ENCODE measurements at regions of chr2 and their contacts with region 1.

Region 1: GRCh38 chr2:50492477-50492851 is 539.5 kb downstream of the NRXN1 start:
- H3K4me3 ChIP-seq: no peak overlapping the region
- H3K27ac ChIP-seq: no peak overlapping the region
- H3K4me1 ChIP-seq: no peaks in the 10 kb centered on the region
- CTCF ChIP-seq: no peak

Region 2: DNA sequence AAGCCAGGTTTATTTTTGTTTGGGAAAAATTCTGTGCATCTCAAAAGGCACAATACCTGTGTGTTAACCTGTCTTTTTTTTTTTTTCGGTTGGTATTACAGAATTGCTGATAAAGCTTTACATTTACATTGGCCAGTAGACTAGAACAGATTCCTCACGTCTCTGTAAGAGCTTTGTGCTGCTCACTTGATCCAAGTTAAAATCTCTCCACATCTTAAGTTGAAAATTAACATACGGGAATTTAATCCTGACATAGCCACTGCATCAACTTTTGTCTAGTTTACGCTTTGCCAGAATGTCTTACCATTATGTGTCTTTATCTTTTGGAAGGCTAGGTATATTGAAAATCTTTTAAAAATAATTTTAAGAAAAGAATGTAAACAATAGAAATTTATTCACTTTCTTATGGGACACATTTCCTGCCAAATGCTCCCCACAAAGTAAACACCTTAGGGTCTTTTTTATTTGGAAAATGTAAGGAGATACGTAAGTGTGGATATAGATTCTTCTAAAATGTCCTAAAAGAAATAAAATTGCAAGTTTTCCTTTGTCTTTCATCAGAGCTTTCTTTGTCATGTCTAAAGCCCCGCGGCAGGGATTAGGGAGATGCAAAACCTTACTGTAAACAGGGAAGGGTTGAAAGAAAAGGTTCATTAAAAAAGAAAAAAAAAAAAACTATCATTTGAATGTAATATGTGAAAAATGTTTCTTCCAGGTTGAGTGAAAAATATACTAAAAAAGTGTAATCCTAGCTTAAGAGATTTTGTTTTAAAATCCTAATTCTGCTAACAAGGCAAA is 373.4 kb before region 1 on chr2:
- CTCF ChIA-PET with region 1: interaction called, 10 read pairs
- POLR2A ChIA-PET with region 1: no interaction called
- H3K4me3 ChIP-seq: no peak overlapping the region
- H3K27ac ChIP-seq: no peak overlapping the region
- H3K4me1 ChIP-seq: no peaks in the 10 kb centered on the region
- CTCF ChIP-seq: no peak

Region 3: DNA sequence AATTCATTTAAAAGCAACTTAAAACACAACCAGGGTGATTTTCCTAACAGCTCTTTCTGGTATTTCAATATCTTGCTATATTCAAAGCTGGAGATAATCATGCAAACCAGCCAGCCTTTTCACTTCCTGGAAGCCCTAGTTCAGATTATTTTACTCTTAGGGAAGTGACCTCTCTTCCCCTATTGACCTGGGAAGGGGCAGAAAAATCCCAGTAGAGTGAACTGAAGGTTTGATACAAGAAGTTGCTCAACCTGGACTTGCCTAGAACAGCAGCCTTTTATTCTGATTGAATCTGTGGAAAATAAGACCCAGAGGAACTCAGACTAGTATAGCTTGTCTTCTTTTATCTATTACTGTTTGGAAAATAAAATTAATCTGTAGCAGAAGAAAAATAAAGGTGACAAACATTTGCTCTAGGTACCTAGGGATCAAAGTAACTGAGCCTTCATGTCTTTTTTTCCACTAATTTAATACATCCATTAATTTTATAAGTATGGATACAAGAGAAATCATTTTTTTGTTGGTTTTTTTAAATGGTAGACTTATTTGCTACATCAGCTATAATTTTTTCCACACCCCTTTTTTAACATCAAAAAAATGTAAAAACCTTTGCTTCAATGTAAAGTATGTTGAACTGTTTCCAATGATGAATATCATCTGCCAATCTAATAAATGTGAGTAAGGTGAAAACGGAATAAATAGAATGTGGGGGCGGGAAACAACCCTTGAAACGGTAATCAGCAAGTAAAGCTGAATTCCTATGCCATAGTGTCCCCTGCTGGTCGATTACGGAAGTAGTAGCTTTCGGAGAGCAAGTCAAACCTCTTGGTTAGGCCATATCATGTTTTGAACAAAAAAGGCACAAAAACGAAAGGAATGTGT is 90.5 kb before region 1 on chr2:
- CTCF ChIA-PET with region 1: interaction called, 17 read pairs
- POLR2A ChIA-PET with region 1: no interaction called
- H3K4me3 ChIP-seq: no peak overlapping the region
- H3K27ac ChIP-seq: no peak overlapping the region
- H3K4me1 ChIP-seq: no peaks in the 10 kb centered on the region
- CTCF ChIP-seq: no peak

Region 4: GRCh38 chr2:50476174-50476573 is 16.3 kb before region 1 on chr2:
- CTCF ChIA-PET with region 1: interaction called, 16 read pairs
- POLR2A ChIA-PET with region 1: no interaction called
- H3K4me3 ChIP-seq: no peak overlapping the region
- H3K27ac ChIP-seq: no peak overlapping the region
- H3K4me1 ChIP-seq: no peaks in the 10 kb centered on the region
- CTCF ChIP-seq: no peak

Region 5: GRCh38 chr2:50513724-50514123 is 21.3 kb after region 1 on chr2:
- CTCF ChIA-PET with region 1: interaction called, 10 read pairs
- POLR2A ChIA-PET with region 1: no interaction called
- H3K4me3 ChIP-seq: no peak overlapping the region
- H3K27ac ChIP-seq: no peak overlapping the region
- H3K4me1 ChIP-seq: no peaks in the 10 kb centered on the region
- CTCF ChIP-seq: no peak